ENCODE measurements at regions of chr1 and their contacts with region 1.

Region 1: GRCh38 chr1:157193702-157194391 is 55.7 kb upstream of the ETV3 start:
- DNase-seq: peak; percentile 61
- H3K4me3 ChIP-seq: no peak overlapping the region
- H3K27ac ChIP-seq: no peak overlapping the region
- H3K4me1 ChIP-seq: no peaks in the 10 kb centered on the region
- H3K27me3 ChIP-seq: peaks cover 17% of the 10 kb centered on the region in 2 experiments
- CTCF ChIP-seq: peak; percentile 73 to 75
- POLR2A ChIP-seq: no peak

Region 2: DNA sequence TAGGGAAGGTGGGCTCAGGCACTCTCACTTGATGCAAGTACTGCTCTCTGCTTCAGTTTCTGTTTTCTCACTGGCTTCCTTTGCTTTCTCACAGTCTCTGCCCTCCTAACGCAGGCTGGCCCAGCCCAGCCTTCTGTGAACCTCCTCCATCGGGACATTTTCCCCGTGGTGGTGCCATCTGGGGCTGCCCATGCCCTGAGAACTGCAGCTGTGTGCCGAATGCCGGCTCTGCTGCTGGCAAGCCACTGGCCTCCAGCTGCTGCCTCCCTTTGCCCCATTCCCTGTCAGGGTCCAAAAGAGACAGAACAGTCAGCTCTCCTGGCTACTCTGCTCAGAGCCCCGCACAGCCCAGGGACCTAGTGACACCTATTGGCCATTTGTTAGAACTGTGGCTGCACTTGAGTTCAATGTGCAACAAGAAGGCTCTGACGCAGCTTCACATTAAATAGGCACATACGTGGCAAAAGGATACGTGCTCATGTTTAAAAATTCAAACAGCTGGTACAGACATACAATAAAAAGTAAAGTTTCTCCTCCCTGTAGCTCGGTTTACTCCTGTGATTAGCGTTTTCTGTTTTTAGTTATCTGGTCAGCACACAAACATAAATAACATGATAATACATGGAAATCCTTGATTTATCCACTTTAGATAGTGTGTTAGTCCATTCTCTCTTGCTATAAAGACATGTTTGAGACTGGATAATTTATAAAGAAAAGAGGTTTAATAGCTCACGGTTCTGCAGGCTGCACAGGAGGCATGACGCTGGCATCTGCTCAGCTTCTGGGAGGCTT is 311.8 kb after region 1 on chr1:
- CTCF ChIA-PET with region 1: interaction called, 22 read pairs
- POLR2A ChIA-PET with region 1: no interaction called
- dilution Hi-C with region 1: no loop called
- intact Hi-C with region 1: loop called (anchors 1 kb)
- DNase-seq: peak; percentile 60
- H3K4me3 ChIP-seq: no peak overlapping the region
- H3K27ac ChIP-seq: no peak overlapping the region
- H3K4me1 ChIP-seq: no peaks in the 10 kb centered on the region
- H3K27me3 ChIP-seq: no peaks in the 10 kb centered on the region
- CTCF ChIP-seq: peak; percentile 70 to 81
- POLR2A ChIP-seq: no peak

Measured in endothelial cell of umbilical vein (primary cell).